Activated CD4-positive, alpha-beta memory T cell treated with anti-CD3 and anti-CD28 coated beads for 36 hours (primary cell): ENCODE measurements at regions of chr5 and their contacts with region 1.

Region 1: DNA sequence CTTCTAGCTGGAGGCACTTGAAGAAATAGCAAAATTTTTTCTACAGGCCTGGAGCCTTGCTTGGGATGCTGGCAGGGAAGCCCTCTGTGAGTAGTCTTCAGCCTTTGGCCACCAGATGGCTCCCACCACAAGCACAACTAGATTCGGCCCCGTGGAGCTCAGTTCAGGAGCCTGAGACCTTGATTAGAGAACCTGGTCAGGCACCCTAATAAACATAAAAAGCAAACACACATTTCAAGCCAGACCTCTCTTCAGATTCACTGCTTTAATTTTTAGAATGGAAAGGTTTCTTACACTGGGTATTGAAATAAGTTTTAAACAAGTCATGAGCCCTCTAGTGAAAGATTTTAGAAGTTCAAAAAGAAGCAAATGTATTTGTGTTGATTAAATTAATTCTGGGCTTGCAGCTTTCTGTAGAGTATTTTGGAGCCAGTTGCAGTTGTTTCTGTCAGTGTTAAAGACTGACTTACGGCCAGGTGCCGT is 41.4 kb downstream of the GLRX start:
- DNase-seq: peak; percentile 81
- H3K4me3 Mint-ChIP-seq: peak overlapping the region; percentile 26
- H3K27ac Mint-ChIP-seq: no peak overlapping the region
- H3K4me1 Mint-ChIP-seq: peaks cover 4% of the 10 kb centered on the region
- H3K27me3 Mint-ChIP-seq: no peaks in the 10 kb centered on the region

Region 2: GRCh38 chr5:95669540-95669939 is 111.6 kb before region 1 on chr5:
- CTCF ChIA-PET with region 1: interaction called, 31 read pairs
- POLR2A ChIA-PET with region 1: no interaction called
- intact Hi-C with region 1: loop called (anchors 1 kb)
- DNase-seq: no peak
- H3K4me3 Mint-ChIP-seq: no peak overlapping the region
- H3K27ac Mint-ChIP-seq: no peak overlapping the region
- H3K4me1 Mint-ChIP-seq: no peaks in the 10 kb centered on the region
- H3K27me3 Mint-ChIP-seq: no peaks in the 10 kb centered on the region

Region 3: DNA sequence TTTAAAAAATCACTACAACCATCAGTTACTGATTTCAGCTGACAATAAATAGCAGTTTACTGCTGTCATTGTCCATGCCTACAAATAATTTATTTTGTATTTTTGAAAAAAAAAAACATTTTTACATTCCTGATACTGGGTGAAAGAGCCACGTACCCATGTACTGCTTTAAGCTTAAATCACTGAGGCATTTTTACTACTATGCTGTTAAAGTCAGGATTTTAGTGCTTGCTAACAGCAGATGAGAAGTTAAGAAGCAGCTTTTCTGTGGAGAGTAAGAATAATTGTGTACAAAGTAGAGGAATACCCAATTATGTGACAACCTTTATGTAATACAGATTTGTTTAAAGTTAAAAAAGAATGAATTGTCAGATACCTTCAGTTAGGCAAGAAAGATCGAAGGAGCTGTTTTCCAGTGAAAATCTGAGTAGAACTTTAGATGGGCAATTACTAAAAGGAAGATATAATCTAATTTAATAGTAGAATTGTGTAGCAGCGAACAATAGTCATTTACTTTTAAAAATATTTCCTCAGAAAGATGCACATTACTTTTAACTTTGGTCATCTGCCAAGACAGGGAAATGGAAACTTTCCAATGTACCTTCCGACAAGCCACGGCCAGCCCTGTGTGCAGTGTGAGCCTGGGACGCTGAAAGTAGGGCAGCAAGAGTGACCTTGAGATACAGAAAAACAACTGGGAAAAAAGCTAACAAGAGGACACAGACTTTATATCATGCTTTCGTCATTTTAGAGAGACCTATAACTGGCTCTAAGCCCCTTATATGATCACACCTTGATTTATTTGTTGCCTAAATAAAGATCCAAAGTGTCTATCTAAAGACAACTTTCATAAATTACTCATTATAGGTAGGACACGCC is 10.1 kb before region 1 on chr5:
- CTCF ChIA-PET with region 1: interaction called, 58 read pairs
- POLR2A ChIA-PET with region 1: no interaction called
- intact Hi-C with region 1: no loop called
- DNase-seq: no peak
- H3K4me3 Mint-ChIP-seq: no peak overlapping the region
- H3K27ac Mint-ChIP-seq: no peak overlapping the region
- H3K4me1 Mint-ChIP-seq: no peaks in the 10 kb centered on the region
- H3K27me3 Mint-ChIP-seq: no peaks in the 10 kb centered on the region

Region 4: GRCh38 chr5:95808686-95809413 is 27.7 kb after region 1 on chr5:
- CTCF ChIA-PET with region 1: interaction called, 66 read pairs
- POLR2A ChIA-PET with region 1: no interaction called
- intact Hi-C with region 1: loop called (anchors 2 kb)
- DNase-seq: peak; percentile 86
- H3K4me3 Mint-ChIP-seq: peak overlapping the region; percentile 6
- H3K27ac Mint-ChIP-seq: peak overlapping the region; percentile 65
- H3K4me1 Mint-ChIP-seq: peaks cover 54% of the 10 kb centered on the region
- H3K27me3 Mint-ChIP-seq: no peaks in the 10 kb centered on the region

Region 5: GRCh38 chr5:95846554-95847260 is 65.6 kb after region 1 on chr5:
- CTCF ChIA-PET with region 1: interaction called, 463 read pairs
- POLR2A ChIA-PET with region 1: interaction called, 5 read pairs
- intact Hi-C with region 1: loop called (anchors 1 kb)
- DNase-seq: peak; percentile 76
- H3K4me3 Mint-ChIP-seq: no peak overlapping the region
- H3K27ac Mint-ChIP-seq: peak overlapping the region; percentile 62
- H3K4me1 Mint-ChIP-seq: peaks cover 15% of the 10 kb centered on the region
- H3K27me3 Mint-ChIP-seq: no peaks in the 10 kb centered on the region